HAP-1 (cell line): ENCODE measurements at regions of chr16 and their contacts with region 1.

Region 1: DNA sequence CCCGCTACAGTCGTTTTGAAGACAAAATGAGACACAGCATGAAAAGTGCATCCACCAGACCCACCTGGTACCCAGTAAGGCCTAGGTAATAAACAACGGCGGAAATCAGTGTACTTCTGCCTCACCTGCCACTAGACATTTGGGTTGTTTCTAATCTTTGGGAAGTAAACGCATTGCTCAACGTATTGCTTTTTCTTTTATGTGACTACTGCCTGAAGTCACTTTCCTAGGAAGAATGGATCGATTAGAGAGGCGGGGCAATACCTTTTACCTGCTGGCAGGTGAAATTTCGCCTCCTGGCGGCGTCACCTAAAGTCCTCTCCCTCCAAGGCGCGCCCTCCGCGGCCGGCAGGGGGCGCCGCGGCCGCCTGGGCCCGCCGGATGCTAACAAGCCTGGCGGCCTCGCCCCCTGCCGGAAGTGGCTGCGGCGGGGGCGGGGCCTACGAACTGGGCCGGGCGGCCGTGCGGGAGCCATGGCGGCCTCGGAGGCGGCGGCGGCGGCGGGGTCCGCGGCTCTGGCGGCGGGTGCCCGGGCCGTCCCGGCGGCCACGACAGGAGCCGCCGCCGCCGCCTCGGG is at the start of gene ATMIN:
- DNase-seq: peak; percentile 74 to 90
- H3K4me3 ChIP-seq: peak within 1 kb of the TSS; percentile 57
- H3K4me1 ChIP-seq: peaks cover 7% of the 10 kb centered on the region
- H3K27me3 ChIP-seq: no peaks in the 10 kb centered on the region

Region 2: DNA sequence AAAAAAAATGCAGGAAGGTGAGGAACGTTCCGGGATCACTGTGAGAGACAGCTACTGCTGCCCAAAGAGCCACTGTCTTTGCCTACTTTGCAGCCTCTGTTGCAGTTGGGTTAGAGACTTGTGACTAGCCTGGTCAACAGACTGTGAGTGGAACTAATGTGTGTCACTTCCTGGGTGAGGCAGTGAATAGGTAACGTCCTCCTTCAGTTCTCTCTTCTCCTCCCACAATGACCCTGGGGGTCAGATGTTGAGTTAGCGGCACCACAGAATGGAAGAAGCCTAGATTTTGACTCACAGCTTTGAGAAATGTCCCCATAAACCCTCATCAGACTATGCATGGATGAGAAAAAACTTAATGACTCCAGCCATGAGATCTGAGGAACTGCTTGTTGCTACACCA is 36.3 kb after region 1 on chr16:
- in situ Hi-C with region 1: loop called (anchors 5 kb)
- DNase-seq: no peak
- H3K4me3 ChIP-seq: no peak overlapping the region
- H3K4me1 ChIP-seq: peaks cover 14% of the 10 kb centered on the region
- H3K27me3 ChIP-seq: no peaks in the 10 kb centered on the region

Region 3: DNA sequence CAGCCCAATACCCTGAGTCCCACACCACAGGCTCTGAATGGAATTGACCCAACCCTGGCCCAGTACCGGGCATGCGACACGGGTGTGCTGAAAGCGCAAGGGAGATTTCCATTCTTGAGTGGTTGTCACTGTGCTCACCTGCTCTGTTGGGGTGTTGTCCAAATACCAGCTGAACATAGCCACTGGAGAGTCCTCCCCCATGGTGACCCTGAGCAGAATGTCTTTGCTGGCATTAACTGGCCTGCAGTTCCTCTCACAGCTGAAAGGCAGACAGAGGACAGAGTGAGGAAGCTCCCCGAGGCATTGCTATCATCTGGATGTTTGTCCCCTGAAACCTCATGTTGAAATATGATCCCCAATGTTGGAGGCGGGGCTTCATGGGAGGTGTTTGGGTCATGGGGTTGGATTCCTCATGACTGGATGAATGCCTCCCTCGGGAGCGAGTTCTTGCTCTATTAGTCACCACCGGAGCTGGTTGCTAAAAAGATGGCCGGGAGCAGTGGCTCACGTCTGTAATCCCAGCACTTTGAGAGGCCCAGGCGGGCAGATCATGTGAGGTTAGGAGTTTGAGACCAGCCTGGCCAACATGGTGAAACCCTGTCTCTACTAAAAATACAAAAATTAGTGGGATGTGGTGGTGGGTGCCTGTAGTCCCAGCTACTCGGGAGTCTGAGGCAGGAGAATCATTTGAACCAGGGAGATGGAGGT is 145.7 kb after region 1 on chr16:
- in situ Hi-C with region 1: no loop called
- DNase-seq: peak; percentile 68 to 90
- H3K4me3 ChIP-seq: no peak overlapping the region
- H3K4me1 ChIP-seq: peaks cover 11% of the 10 kb centered on the region
- H3K27me3 ChIP-seq: no peaks in the 10 kb centered on the region

Region 4: DNA sequence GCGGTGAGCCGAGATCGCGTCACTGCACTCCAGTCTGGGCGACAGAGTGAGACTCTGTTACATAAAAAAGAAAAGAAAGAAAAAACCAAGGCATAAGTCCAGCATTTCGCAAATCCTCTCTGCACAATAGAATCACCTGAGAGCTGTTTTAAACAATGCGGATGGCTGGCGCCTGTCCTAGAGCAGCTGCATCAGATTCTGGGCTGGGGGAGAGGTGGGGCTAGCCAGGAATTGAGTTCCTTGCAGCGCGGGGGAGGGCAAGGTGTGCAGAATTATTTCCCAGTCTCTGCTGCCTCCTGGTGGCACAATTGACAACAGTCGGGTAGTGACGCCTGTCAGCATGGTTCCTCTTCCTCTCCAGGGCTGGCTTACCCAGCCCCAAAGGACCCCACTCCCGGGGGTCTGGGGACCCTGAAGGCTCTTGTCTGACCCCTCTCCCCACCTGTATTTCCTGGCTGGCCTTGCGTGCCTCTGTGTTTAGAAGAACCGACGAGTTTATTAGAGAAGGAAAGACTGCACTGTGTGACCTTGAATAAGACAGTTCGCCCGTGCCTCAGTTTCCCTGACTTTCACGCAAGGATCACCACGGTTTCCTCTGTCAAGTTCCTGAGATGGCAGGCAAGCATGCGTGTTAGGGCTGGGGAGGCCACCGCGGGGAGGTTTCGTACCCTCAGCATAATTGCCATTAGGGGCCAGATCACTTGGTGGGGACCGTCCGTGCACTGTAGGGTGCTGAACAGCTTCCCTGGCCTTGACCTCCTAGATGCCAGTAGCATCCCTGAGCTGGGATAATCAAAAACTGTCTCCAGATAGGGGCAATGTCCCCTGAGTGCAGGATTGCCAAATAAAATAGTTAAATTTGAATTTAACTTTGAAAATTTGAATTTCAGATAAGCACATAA is 702.6 kb after region 1 on chr16:
- in situ Hi-C with region 1: loop called (anchors 25 kb)
- DNase-seq: peak; percentile 89 to 95
- H3K4me3 ChIP-seq: peak overlapping the region; percentile 0; the same call in 1 of the 2 replicates
- H3K4me1 ChIP-seq: peaks cover 3% of the 10 kb centered on the region
- H3K27me3 ChIP-seq: no peaks in the 10 kb centered on the region